ENCODE measurements at regions of chr16 and their contacts with region 1.

Region 1: GRCh38 chr16:3038896-3039295 is 2.2 kb upstream of the BICDL2 start:
- DNase-seq: no peak
- H3K4me3 ChIP-seq: no peak overlapping the region
- CTCF ChIP-seq: no peak
- POLR2A ChIP-seq: no peak

Region 2: DNA sequence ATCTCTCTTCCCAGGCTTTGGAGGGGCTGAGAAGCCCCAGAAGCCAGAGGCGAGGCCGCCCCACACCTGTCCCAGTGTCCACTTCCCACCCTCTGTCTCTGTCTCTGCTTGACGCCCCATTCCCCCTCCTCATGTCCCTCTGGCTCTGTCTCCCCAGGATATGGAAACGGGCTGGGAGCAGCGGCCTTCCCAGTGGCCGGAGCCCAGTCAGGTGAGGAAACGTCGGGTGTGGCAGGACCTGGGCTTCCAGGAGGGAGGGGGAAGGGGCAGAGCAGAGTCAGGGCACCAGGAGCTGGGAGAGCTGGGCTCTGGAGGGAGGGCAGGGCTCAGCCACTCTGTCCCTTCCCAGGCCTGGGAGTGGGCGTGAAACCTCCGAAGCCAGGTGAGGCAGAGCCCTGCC is 48.0 kb before region 1 on chr16:
- intact Hi-C with region 1: loop called (anchors 1 kb)
- DNase-seq: no peak
- H3K4me3 ChIP-seq: no peak overlapping the region
- CTCF ChIP-seq: no peak
- POLR2A ChIP-seq: no peak

Region 3: DNA sequence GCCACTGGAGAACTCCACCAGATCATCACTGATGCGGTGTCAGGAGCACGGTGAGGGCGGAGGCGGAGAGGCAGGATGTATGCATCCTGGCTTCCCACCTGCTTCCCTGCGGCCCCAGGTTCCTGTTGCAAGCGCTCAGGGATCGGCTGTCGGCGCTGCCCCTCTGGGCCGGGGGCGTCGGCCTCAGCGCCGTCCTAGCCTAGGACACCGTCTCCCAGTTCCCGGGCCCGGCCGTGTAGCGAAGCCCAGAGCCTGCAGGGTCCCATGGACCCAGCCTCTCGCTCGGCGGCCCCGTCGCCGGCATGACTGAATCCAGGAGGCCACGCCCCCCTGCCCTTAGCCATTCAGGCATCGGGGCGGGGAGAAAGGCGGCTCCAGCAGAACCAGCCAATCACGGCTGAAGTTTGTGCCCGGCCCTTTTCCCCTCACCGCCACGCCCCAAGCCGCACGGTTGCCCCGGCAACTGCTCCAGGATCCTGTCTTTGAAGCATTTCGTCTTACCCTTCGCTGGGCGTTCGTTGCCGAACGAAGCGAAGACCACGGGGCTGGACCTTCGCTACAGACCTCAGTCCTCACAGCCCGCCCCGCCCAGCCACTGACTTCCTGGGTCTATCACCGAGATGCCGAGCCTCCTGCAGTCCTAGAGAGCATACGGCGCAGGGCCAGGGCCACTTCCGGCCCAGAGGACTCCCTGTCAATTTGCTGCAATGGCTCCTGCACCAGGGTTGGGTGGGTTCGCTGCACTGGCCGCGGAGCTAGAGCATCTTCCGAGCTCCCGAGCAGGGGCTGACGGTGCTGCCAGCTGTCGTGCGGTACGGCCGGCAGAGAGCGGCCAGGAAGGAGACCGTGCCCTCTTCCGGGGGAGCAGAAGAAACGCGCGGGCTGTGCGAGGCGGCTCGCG is 85.3 kb after region 1 on chr16:
- intact Hi-C with region 1: no loop called
- DNase-seq: peak; percentile 96 to 99
- H3K4me3 ChIP-seq: peak overlapping the region; percentile 53
- CTCF ChIP-seq: no peak
- POLR2A ChIP-seq: no peak

Measured in lower leg skin (tissue), 4 donors.